Right ventricle myocardium superior (tissue), 1 donor: ENCODE measurements at regions of chr17 and their contacts with region 1.

Region 1: DNA sequence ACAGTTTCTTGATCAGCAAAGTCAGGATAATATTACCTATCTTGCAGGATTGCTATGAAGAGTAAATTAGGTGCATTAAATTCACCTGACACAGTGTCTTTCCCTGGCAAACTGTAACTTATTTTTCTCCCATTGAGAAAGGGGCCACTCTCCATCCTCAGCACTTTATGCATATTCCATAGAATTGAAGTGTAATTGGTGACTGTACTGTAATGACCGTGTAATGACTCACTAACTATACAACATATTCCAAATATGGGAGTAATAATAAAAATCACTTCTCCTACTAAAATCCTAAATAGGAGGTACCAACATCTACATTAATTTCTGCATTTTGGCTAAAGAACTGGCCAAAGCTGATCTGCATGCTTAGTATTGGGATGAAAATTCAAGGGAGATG is 141.9 kb upstream of the NOG start:
- DNase-seq: no peak
- ATAC-seq: no peak

Region 2: GRCh38 chr17:56358651-56359050 is 93.0 kb before region 1 on chr17:
- intact Hi-C with region 1: no loop called
- DNase-seq: no peak
- ATAC-seq: no peak

Region 3: GRCh38 chr17:56392051-56392673 is 59.5 kb before region 1 on chr17:
- intact Hi-C with region 1: loop called (anchors 10 kb)
- DNase-seq: no peak
- ATAC-seq: no peak

Region 4: GRCh38 chr17:56540836-56541235 is 89.2 kb after region 1 on chr17:
- intact Hi-C with region 1: no loop called
- DNase-seq: no peak
- ATAC-seq: no peak